Left cardiac atrium (tissue), 4 donors: ENCODE measurements at regions of chr11 and their contacts with region 1.

Region 1: DNA sequence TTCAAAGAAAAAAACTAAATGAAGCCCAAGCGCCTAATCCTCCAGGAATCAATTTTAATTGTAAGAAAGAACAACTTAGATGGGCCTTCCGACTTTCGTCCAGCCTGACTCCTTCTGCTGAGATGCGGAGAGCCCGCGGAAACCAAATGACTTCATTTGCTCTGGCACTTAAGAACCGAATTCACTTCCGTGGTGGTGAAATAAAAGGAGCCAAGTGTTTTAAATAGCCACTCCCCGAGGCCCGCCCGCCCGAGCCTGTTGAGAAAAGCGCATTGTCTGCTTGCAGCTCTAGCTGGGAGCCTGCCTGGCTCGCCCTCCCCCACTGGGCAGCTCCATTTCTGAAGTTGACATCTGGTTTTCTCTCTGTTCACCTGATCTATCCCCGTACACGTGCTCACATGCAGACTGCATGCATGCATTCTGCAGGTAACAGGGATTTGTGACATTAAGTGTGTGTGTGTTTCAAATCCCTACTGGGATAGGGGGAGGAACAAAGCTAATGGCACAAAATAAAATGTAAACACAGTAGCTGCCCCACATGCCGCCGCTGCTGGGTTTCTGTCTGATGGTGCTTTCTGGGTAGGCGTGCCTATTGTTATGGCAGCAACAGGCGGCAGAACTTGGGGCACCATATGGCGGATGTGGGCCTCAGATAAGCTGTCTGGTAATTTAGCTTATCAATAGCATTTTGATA is 6.2 kb downstream of the TEAD1 start:
- DNase-seq: peak; percentile 84
- ATAC-seq: peak; percentile 92

Region 2: DNA sequence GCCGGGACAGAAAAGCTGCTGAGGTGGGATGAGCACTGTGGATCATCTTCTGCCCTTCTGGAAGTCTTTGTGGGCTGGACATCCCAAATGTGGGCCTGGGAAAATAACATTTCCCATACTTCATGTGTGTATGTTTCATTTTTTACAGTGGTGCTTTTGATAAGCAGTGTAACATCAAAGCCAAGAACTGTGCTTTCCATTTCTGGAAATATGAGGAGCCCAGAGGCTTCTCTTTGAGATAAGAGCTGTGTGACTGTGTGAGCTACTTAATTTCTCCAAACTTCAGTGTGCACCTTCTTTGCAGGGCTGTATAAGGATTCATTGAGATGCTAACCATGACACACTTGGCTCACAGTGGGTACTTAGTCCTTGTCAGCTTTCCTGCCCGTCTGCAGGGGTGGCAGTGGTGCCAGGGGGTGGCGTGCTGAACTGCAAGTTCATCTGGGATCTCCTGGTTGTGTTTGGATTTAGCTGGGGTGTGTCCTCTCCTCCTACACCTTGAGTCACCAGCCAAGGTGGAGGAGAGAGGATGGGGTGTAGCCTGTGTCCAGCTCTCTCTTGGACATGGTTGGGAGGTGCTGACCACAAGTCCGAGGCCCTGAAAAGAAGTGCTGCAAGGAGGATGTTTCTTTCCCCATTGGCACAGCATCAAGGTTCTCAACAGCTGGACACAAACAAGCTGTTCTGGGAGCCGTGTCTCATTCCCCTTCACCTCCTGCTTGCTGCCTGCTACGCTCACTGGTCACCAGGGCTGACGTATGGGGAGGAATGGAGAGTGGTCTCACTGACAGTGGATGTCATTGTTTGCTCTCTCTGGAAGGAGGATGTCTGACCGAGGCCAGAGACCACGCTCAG is 133.2 kb after region 1 on chr11:
- intact Hi-C with region 1: loop called in 1 of 2 experiments (anchors 10 kb)
- DNase-seq: peak; percentile 24
- ATAC-seq: peak; percentile 35 to 62